Vagina (tissue), 2 donors: ENCODE measurements at regions of chr9 and their contacts with region 1.

Region 1: DNA sequence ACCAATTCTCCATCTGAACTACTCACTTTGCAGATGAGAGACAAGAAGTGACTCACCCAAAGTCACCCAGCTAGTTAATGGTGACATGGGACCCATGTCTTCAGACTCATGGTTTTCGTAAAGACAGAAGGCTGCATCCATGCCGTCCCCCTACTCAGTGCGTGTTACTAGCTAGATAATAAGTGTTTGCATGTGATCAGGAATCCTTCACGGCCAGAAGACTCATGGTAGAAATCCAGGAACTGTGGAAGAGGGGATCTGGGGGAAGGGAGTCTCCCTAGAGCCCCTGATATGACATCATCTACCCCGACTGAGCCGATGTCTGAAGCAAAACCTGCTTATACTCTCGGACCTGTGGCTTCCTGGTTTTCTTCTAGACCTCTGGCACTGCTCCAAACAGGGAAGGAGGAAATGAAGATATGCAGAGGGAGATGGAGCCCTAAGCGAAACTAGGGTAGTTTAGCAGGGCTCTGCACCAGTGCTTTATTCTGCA is 3.3 kb downstream of the RNF183 start:
- DNase-seq: no peak
- H3K4me3 ChIP-seq: no peak overlapping the region
- H3K27ac ChIP-seq: no peak overlapping the region
- H3K4me1 ChIP-seq: no peaks in the 10 kb centered on the region
- H3K27me3 ChIP-seq: no peaks in the 10 kb centered on the region
- CTCF ChIP-seq: no peak
- POLR2A ChIP-seq: no peak

Region 2: DNA sequence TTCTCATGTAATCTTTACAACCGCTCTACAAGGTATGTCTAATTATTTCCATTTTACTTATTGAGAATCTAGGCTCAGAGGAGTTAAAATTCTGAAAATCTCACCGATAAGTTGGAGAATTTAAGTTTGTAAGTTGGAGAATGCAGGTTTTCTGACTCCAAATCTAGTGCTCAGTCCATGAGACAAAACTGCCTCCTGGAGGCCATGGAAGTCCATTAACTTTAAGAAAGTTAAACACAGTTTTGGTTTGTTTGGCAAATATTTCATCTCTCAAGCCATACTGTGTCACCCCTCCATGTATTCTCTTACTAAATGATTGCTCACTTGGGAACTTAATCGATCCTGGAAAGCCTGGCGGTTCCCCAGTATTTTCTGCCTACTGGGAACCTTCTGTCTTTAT is 634.5 kb before region 1 on chr9:
- intact Hi-C with region 1: loop called (anchors 5 kb)
- DNase-seq: no peak
- H3K4me3 ChIP-seq: no peak overlapping the region
- H3K27ac ChIP-seq: no peak overlapping the region
- H3K4me1 ChIP-seq: no peaks in the 10 kb centered on the region
- H3K27me3 ChIP-seq: no peaks in the 10 kb centered on the region
- CTCF ChIP-seq: no peak
- POLR2A ChIP-seq: no peak